CD8-positive, alpha-beta memory T cell (primary cell): ENCODE measurements at regions of chr17 and their contacts with region 1.

Region 1: GRCh38 chr17:7989781-7990655 is 12.4 kb upstream of the GUCY2D start:
- DNase-seq: peak; percentile 83 to 92 (median 88)
- H3K4me3 ChIP-seq: peak overlapping the region; percentile 60
- H3K4me3 Mint-ChIP-seq: peak overlapping the region; percentile 75 to 88 (median 82)
- H3K27ac ChIP-seq: peak overlapping the region; percentile 16
- H3K27ac Mint-ChIP-seq: peak overlapping the region; percentile 37 to 97 (median 82)
- H3K4me1 ChIP-seq: peaks cover 14% of the 10 kb centered on the region
- H3K4me1 Mint-ChIP-seq: peaks cover 18 to 26% (median 25%) of the 10 kb centered on the region in 3 donors
- H3K27me3 ChIP-seq: no peaks in the 10 kb centered on the region
- H3K27me3 Mint-ChIP-seq: peaks cover 2 to 5% of the 10 kb centered on the region in 2 donors

Region 2: GRCh38 chr17:7834962-7835813 is 154.8 kb before region 1 on chr17:
- CTCF ChIA-PET with region 1: interaction called, 27 read pairs
- POLR2A ChIA-PET with region 1: interaction called, 3 read pairs
- DNase-seq: peak; percentile 88 to 96 (median 90)
- H3K4me3 ChIP-seq: peak overlapping the region; percentile 86
- H3K4me3 Mint-ChIP-seq: peak overlapping the region; percentile 90 to 100 (median 95)
- H3K27ac ChIP-seq: peak overlapping the region; percentile 98
- H3K27ac Mint-ChIP-seq: peak overlapping the region; percentile 99 to 100 (median 99)
- H3K4me1 ChIP-seq: peaks cover 44% of the 10 kb centered on the region
- H3K4me1 Mint-ChIP-seq: peaks cover 46 to 53% (median 48%) of the 10 kb centered on the region in 3 donors
- H3K27me3 ChIP-seq: peaks cover 5% of the 10 kb centered on the region
- H3K27me3 Mint-ChIP-seq: peaks cover 9% of the 10 kb centered on the region in 2 donors

Region 3: GRCh38 chr17:7862692-7863437 is 127.2 kb before region 1 on chr17:
- CTCF ChIA-PET with region 1: interaction called, 175 read pairs
- POLR2A ChIA-PET with region 1: interaction called, 6 read pairs
- DNase-seq: peak in 4 of 5 donors; percentile 49 to 70 (median 60)
- H3K4me3 ChIP-seq: no peak overlapping the region
- H3K4me3 Mint-ChIP-seq: no peak overlapping the region
- H3K27ac ChIP-seq: no peak overlapping the region
- H3K27ac Mint-ChIP-seq: peak overlapping the region in 3 of 8 donors; percentile 12 to 58 (median 40)
- H3K4me1 ChIP-seq: peaks cover 17% of the 10 kb centered on the region
- H3K4me1 Mint-ChIP-seq: peaks cover 17 to 18% (median 17%) of the 10 kb centered on the region in 3 donors
- H3K27me3 ChIP-seq: no peaks in the 10 kb centered on the region
- H3K27me3 Mint-ChIP-seq: no peaks in the 10 kb centered on the region

Region 4: DNA sequence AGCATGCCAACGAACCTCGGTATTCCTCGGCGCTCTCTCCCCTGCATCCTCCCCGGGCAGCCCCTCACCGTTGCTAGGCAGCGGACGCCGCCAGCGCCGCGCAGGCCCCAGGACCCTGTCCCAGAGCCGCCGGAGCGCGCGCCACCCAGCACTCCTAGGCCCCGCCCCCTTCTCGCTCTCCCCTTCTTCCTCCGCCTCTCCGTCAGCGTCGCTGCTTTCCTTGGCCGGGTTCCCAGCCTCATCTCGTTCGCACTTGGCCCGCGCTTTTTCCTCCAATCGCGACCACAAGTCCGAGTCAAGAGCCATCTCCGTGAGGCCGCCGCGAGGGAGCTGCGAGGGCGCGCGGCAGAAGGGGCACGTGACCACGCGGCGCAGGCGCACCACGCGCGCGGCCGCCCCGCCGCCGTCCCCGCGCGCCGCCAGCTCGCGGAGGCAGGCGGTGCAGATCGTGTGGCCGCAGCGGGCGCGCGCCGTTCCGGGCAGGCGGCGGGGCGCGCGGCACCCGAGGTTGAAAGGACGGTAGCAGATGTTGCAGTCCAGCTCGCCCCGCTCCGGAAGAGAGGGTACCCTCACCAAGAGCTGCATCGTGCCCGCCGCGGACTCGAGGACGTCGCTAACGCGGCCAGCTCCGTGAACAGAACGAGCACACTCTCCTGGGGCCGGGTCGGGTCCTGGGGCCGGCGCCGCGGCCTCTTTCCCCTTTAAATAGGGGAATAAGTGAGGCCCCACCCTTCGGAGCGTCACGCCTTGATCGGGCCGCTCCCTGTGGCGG is 74.2 kb before region 1 on chr17 and contains the start of gene RNF227:
- CTCF ChIA-PET with region 1: interaction called, 180 read pairs
- POLR2A ChIA-PET with region 1: interaction called, 5 read pairs
- DNase-seq: peak; percentile 72 to 89 (median 84)
- H3K4me3 ChIP-seq: peak within 1 kb of the TSS; percentile 75
- H3K4me3 Mint-ChIP-seq: peak within 1 kb of the TSS; percentile 78 to 95 (median 89)
- H3K27ac ChIP-seq: peak within 1 kb of the TSS; percentile 43
- H3K27ac Mint-ChIP-seq: peak within 1 kb of the TSS; percentile 83 to 98 (median 92)
- H3K4me1 ChIP-seq: peaks cover 30% of the 10 kb centered on the region
- H3K4me1 Mint-ChIP-seq: peaks cover 27 to 29% (median 29%) of the 10 kb centered on the region in 3 donors
- H3K27me3 ChIP-seq: no peaks in the 10 kb centered on the region
- H3K27me3 Mint-ChIP-seq: no peaks in the 10 kb centered on the region
- total RNA-seq, gene RNF227: 4.4 to 4.8 TPM

Region 5: GRCh38 chr17:7931709-7932482 is 58.1 kb before region 1 on chr17 and contains the starts of genes CNTROB and TRAPPC1:
- CTCF ChIA-PET with region 1: interaction called, 34 read pairs
- POLR2A ChIA-PET with region 1: no interaction called
- DNase-seq: peak; percentile 99 to 100 (median 99)
- H3K4me3 ChIP-seq: peak within 1 kb of the TSS; percentile 97
- H3K4me3 Mint-ChIP-seq: peak within 1 kb of the TSS; percentile 88 to 99 (median 96)
- H3K27ac ChIP-seq: peak within 1 kb of the TSS; percentile 92
- H3K27ac Mint-ChIP-seq: peak within 1 kb of the TSS; percentile 74 to 99 (median 98)
- H3K4me1 ChIP-seq: peaks cover 34% of the 10 kb centered on the region
- H3K4me1 Mint-ChIP-seq: peaks cover 43 to 59% (median 54%) of the 10 kb centered on the region in 3 donors
- H3K27me3 ChIP-seq: no peaks in the 10 kb centered on the region
- H3K27me3 Mint-ChIP-seq: peaks cover 0 to 2% of the 10 kb centered on the region in 2 donors
- total RNA-seq, gene CNTROB: 44.3 to 46.8 TPM
- total RNA-seq, gene TRAPPC1: 158 TPM

Region 6: GRCh38 chr17:8001976-8002720 is 12.1 kb after region 1 on chr17 and contains the start of gene GUCY2D:
- CTCF ChIA-PET with region 1: interaction called, 12 read pairs
- POLR2A ChIA-PET with region 1: no interaction called
- DNase-seq: no peak
- H3K4me3 ChIP-seq: no peak within 1 kb of the TSS
- H3K4me3 Mint-ChIP-seq: peak within 1 kb of the TSS in 6 of 7 donors; percentile 55 to 76 (median 70)
- H3K27ac ChIP-seq: no peak within 1 kb of the TSS
- H3K27ac Mint-ChIP-seq: peak within 1 kb of the TSS in 2 of 8 donors; percentile 21 to 73
- H3K4me1 ChIP-seq: peaks cover 6% of the 10 kb centered on the region
- H3K4me1 Mint-ChIP-seq: peaks cover 6 to 11% (median 7%) of the 10 kb centered on the region in 3 donors
- H3K27me3 ChIP-seq: peaks cover 18% of the 10 kb centered on the region
- H3K27me3 Mint-ChIP-seq: peaks cover 50 to 62% of the 10 kb centered on the region in 2 donors
- total RNA-seq, gene GUCY2D: not detected

Region 7: GRCh38 chr17:8057691-8058114 is 67.7 kb after region 1 on chr17:
- CTCF ChIA-PET with region 1: interaction called, 10 read pairs
- POLR2A ChIA-PET with region 1: no interaction called
- DNase-seq: peak; percentile 11 to 66 (median 63)
- H3K4me3 ChIP-seq: no peak overlapping the region
- H3K4me3 Mint-ChIP-seq: no peak overlapping the region
- H3K27ac ChIP-seq: no peak overlapping the region
- H3K27ac Mint-ChIP-seq: no peak overlapping the region
- H3K4me1 ChIP-seq: peaks cover 9% of the 10 kb centered on the region
- H3K4me1 Mint-ChIP-seq: peaks cover 12 to 22% (median 22%) of the 10 kb centered on the region in 3 donors
- H3K27me3 ChIP-seq: peaks cover 14% of the 10 kb centered on the region
- H3K27me3 Mint-ChIP-seq: peaks cover 21 to 50% of the 10 kb centered on the region in 2 donors